GM12878 (cell line): ENCODE measurements at regions of chr14 and their contacts with region 1.

Region 1: DNA sequence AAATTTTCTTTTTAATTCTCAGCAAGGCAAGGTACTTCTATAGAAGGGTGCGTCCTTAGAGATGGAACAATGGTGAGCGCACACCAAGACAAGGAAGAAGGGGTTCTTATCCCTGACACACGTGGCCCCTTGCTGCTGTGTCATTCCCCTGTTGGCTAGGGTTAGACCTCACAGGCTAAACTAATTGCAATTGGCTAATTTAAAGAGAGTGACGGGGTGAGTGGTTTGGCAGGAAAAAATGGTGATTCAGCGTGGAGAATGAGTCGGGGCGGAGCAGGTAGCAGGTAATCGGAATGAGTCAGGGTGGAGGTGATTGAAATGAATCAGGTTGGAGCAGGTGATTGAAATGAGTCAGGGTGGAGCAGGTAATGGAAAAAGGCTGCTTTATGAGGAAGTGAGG is 36.3 kb upstream of the HECTD1 start:
- DNase-seq: no peak
- ATAC-seq: no peak
- H3K4me3 ChIP-seq: no peak overlapping the region
- H3K27ac ChIP-seq: no peak overlapping the region
- H3K4me1 ChIP-seq: peaks cover 7% of the 10 kb centered on the region
- H3K27me3 ChIP-seq: no peaks in the 10 kb centered on the region
- CTCF ChIP-seq: no peak
- EP300 ChIP-seq: no peak
- POLR2A ChIP-seq: no peak
- RAD21 ChIP-seq: no peak

Region 2: GRCh38 chr14:30129807-30130206 is 1114.1 kb before region 1 on chr14:
- CTCF ChIA-PET with region 1: no interaction called
- POLR2A ChIA-PET with region 1: no interaction called
- RAD21 ChIA-PET with region 1: no interaction called
- SMC1A ChIA-PET with region 1: no interaction called
- in situ Hi-C with region 1: no loop called
- intact Hi-C with region 1: no loop called
- DNase-seq: no peak
- ATAC-seq: no peak
- H3K4me3 ChIP-seq: no peak overlapping the region
- H3K27ac ChIP-seq: no peak overlapping the region
- H3K4me1 ChIP-seq: no peaks in the 10 kb centered on the region
- H3K27me3 ChIP-seq: no peaks in the 10 kb centered on the region
- CTCF ChIP-seq: no peak
- EP300 ChIP-seq: no peak
- POLR2A ChIP-seq: no peak
- RAD21 ChIP-seq: no peak

Region 3: DNA sequence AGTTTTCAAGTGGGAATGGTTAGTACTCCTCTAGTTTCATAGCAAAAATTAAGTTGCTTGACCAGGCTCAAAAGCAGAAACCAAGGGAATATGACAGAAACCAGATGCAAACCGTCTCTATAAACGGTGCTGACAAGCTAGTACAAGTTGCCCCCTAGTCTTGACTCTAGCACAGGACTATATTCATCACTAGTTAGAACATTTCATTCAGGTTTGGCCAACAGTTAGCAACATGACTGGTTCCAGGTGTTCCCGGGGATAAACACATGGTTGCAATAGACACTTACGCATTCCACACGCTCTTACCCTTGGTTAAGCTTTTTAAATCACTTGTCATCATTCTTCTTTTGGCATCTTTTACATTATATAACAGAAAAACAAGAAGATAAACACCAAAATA is 518.1 kb before region 1 on chr14:
- CTCF ChIA-PET with region 1: no interaction called
- POLR2A ChIA-PET with region 1: no interaction called
- RAD21 ChIA-PET with region 1: no interaction called
- SMC1A ChIA-PET with region 1: no interaction called
- in situ Hi-C with region 1: no loop called
- intact Hi-C with region 1: no loop called
- DNase-seq: no peak
- ATAC-seq: no peak
- H3K4me3 ChIP-seq: no peak overlapping the region
- H3K27ac ChIP-seq: no peak overlapping the region
- H3K4me1 ChIP-seq: no peaks in the 10 kb centered on the region
- H3K27me3 ChIP-seq: no peaks in the 10 kb centered on the region
- CTCF ChIP-seq: no peak
- EP300 ChIP-seq: no peak
- POLR2A ChIP-seq: no peak
- RAD21 ChIP-seq: no peak

Region 4: GRCh38 chr14:31127690-31128089 is 116.2 kb before region 1 on chr14:
- CTCF ChIA-PET with region 1: no interaction called
- POLR2A ChIA-PET with region 1: no interaction called
- RAD21 ChIA-PET with region 1: no interaction called
- SMC1A ChIA-PET with region 1: no interaction called
- in situ Hi-C with region 1: no loop called
- intact Hi-C with region 1: no loop called
- DNase-seq: no peak
- ATAC-seq: peak; percentile 90
- H3K4me3 ChIP-seq: no peak overlapping the region
- H3K27ac ChIP-seq: no peak overlapping the region
- H3K4me1 ChIP-seq: peaks cover 11% of the 10 kb centered on the region
- H3K27me3 ChIP-seq: no peaks in the 10 kb centered on the region
- CTCF ChIP-seq: no peak
- EP300 ChIP-seq: peak; percentile 68 to 75; a peak in 2 of 4 replicates
- POLR2A ChIP-seq: no peak
- RAD21 ChIP-seq: no peak

Region 5: DNA sequence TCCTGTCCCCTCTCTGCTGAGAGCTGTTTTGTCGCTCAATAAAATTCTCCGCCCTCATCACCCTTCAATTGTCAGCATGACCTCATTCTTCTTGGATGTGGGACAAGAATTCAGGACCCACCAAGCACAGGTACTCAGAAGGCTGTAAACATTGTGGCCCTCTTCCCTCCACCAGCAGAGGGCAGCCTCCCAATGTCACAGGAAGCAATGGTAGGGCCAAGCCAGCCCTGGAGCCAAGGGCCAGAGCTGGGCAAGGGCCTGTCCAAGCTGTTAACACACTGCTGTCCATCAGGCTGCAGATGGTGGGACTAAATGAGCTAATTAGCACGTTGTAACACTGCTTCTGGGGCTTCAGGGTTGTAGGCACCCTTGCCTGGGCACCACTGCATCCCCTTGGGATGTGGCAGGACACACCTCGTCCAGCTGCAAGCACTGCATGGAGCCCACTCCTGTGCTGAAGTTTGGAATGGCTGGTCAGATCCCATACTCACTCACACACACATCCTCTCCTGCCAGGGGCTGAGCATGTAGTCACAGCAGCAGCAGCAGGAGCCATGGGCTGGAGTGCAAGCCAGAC is 26.4 kb after region 1 on chr14:
- CTCF ChIA-PET with region 1: no interaction called
- POLR2A ChIA-PET with region 1: no interaction called
- RAD21 ChIA-PET with region 1: no interaction called
- SMC1A ChIA-PET with region 1: no interaction called
- in situ Hi-C with region 1: no loop called
- intact Hi-C with region 1: loop called (anchors 1 kb)
- DNase-seq: no peak
- ATAC-seq: peak; percentile 85
- H3K4me3 ChIP-seq: no peak overlapping the region
- H3K27ac ChIP-seq: no peak overlapping the region
- H3K4me1 ChIP-seq: peaks cover 6% of the 10 kb centered on the region; the same call in 1 of the 2 replicates
- H3K27me3 ChIP-seq: no peaks in the 10 kb centered on the region
- CTCF ChIP-seq: peak; percentile 34 to 62 (median 52)
- EP300 ChIP-seq: no peak
- POLR2A ChIP-seq: no peak
- RAD21 ChIP-seq: peak; percentile 50

Region 6: GRCh38 chr14:31950764-31951637 is 707.1 kb after region 1 on chr14:
- CTCF ChIA-PET with region 1: no interaction called
- POLR2A ChIA-PET with region 1: no interaction called
- RAD21 ChIA-PET with region 1: no interaction called
- SMC1A ChIA-PET with region 1: no interaction called
- in situ Hi-C with region 1: no loop called
- intact Hi-C with region 1: no loop called
- DNase-seq: no peak
- ATAC-seq: no peak
- H3K4me3 ChIP-seq: no peak overlapping the region
- H3K27ac ChIP-seq: no peak overlapping the region
- H3K4me1 ChIP-seq: no peaks in the 10 kb centered on the region
- H3K27me3 ChIP-seq: no peaks in the 10 kb centered on the region
- CTCF ChIP-seq: no peak
- EP300 ChIP-seq: no peak
- POLR2A ChIP-seq: no peak
- RAD21 ChIP-seq: no peak